K562 (cell line): ENCODE measurements at regions of chr6 and their contacts with region 1.

Region 1: GRCh38 chr6:24720604-24721460 is 1.9 kb upstream of the C6orf62 start:
- DNase-seq: peak; percentile 98 to 100 (median 98)
- ATAC-seq: peak; percentile 88
- H3K4me3 ChIP-seq: peak overlapping the region; percentile 94
- H3K27ac ChIP-seq: peak overlapping the region; percentile 97
- H3K4me1 ChIP-seq: peaks cover 6 to 17% of the 10 kb centered on the region in 2 experiments; a peak in 3 of 5 replicates
- H3K27me3 ChIP-seq: no peaks in the 10 kb centered on the region
- CTCF ChIP-seq: peak in 2 of 3 experiments; percentile 9 to 16; a peak in 1 of 6 replicates
- EP300 ChIP-seq: no peak; the same call in none of the 2 replicates
- POLR2A ChIP-seq: peak; percentile 99
- RAD21 ChIP-seq: no peak

Region 2: GRCh38 chr6:24117021-24117420 is 603.8 kb before region 1 on chr6:
- CTCF ChIA-PET with region 1: no interaction called
- POLR2A ChIA-PET with region 1: no interaction called
- in situ Hi-C with region 1: no loop called
- intact Hi-C with region 1: no loop called
- DNase-seq: no peak
- ATAC-seq: no peak
- H3K4me3 ChIP-seq: no peak overlapping the region
- H3K27ac ChIP-seq: no peak overlapping the region
- H3K4me1 ChIP-seq: no peaks in the 10 kb centered on the region
- H3K27me3 ChIP-seq: no peaks in the 10 kb centered on the region
- CTCF ChIP-seq: no peak
- EP300 ChIP-seq: no peak
- POLR2A ChIP-seq: no peak
- RAD21 ChIP-seq: no peak

Region 3: GRCh38 chr6:24666641-24667377 is 54.0 kb before region 1 on chr6 and contains the starts of genes ACOT13 and TDP2:
- CTCF ChIA-PET with region 1: interaction called, 3 read pairs
- POLR2A ChIA-PET with region 1: interaction called, 22 read pairs
- in situ Hi-C with region 1: no loop called
- intact Hi-C with region 1: loop called (anchors 2 kb)
- DNase-seq: peak; percentile 97 to 100 (median 98)
- ATAC-seq: peak; percentile 91
- H3K4me3 ChIP-seq: peak within 1 kb of the TSS; percentile 63
- H3K27ac ChIP-seq: peak within 1 kb of the TSS; percentile 91
- H3K4me1 ChIP-seq: peaks cover 8 to 12% of the 10 kb centered on the region in 2 experiments; a peak in 4 of 5 replicates
- H3K27me3 ChIP-seq: no peaks in the 10 kb centered on the region
- CTCF ChIP-seq: peak; percentile 71 to 82 (median 79)
- EP300 ChIP-seq: peak; percentile 37
- POLR2A ChIP-seq: peak; percentile 94
- RAD21 ChIP-seq: peak; percentile 53 to 56; a peak in 3 of 4 replicates
- polyA plus RNA-seq, gene ACOT13: 106 to 127 TPM
- polyA plus RNA-seq, gene TDP2: 27.7 to 28.7 TPM

Region 4: DNA sequence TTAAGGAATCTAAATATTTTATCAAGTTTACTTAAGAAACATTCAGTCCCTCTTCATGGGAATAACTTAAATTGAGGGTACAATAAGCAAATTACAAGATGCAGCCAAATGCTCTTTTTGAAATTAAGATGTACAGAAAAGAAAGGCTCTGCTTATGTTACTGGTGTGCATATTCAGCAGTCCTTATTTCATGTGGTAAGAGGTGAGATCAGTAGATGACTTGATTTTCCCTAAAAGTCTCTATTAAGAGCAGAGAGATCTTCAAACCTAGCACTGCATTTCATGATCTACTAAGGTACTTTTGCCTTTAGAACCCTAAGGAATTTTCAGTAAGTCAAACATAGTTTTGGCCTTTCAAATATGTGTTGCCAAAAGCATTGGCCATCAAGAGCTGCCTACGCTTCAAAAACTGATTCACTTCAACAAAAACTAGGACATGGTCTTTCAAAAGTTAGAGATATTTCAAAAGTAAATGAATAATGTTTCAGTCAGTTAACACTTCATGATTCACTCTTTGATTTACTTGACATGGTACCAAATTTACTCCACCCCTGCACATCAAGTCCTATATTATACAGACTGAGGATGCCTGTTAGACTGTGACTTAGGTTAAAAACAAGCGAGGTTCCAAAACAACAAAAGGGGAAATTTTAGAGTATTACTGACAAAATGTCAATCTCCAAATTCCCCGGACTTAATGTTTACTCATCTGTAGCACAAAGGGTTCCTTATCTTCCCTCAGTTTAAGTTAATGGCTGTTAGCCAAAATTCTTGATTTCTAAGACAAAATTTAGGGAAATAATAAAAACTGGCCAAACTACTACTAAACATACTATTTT is 21.1 kb before region 1 on chr6:
- CTCF ChIA-PET with region 1: no interaction called
- POLR2A ChIA-PET with region 1: interaction called, 31 read pairs
- in situ Hi-C with region 1: no loop called
- intact Hi-C with region 1: no loop called
- DNase-seq: no peak
- ATAC-seq: no peak
- H3K4me3 ChIP-seq: no peak overlapping the region
- H3K27ac ChIP-seq: no peak overlapping the region
- H3K4me1 ChIP-seq: no peaks in the 10 kb centered on the region
- H3K27me3 ChIP-seq: no peaks in the 10 kb centered on the region
- CTCF ChIP-seq: no peak
- EP300 ChIP-seq: no peak
- POLR2A ChIP-seq: no peak
- RAD21 ChIP-seq: no peak

Region 5: GRCh38 chr6:24710519-24711303 is 10.1 kb before region 1 on chr6:
- CTCF ChIA-PET with region 1: no interaction called
- POLR2A ChIA-PET with region 1: interaction called, 45 read pairs
- in situ Hi-C with region 1: no loop called
- intact Hi-C with region 1: no loop called
- DNase-seq: no peak
- ATAC-seq: no peak
- H3K4me3 ChIP-seq: no peak overlapping the region
- H3K27ac ChIP-seq: no peak overlapping the region
- H3K4me1 ChIP-seq: no peaks in the 10 kb centered on the region; a peak in 1 of 5 replicates
- H3K27me3 ChIP-seq: no peaks in the 10 kb centered on the region
- CTCF ChIP-seq: no peak
- EP300 ChIP-seq: no peak
- POLR2A ChIP-seq: no peak
- RAD21 ChIP-seq: no peak

Region 6: DNA sequence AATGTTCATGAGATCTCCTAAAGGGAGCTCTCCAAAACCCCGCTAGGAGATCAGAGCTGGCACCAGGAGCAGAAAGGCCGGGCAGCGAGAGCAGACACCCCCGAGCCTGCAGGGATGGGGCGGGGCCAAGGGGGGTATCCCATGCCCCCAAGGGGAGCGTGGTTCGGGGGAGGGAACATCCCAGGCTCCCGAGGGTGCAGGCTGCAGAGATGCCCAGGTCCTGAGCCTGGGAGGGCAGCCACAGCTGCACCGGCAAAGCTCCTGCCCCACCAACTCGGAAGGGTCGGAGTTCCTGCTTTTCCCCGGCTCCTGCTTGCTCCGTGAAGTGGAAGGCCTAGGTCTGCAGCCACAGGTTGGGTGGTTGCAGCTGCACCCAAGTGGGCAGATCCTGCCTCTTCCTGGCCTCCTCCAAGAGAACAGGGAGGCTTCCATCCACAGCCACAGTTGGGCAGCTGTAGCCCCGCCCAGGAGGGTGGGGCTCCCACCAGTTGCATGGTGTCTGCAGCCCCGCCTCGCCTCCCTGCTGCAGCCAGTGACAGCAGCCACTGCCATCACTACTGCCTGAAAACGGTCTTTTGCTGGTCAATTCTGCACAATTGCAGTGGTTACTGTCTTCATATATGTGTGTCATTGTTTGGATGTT is 40.5 kb after region 1 on chr6:
- CTCF ChIA-PET with region 1: interaction called, 4 read pairs
- POLR2A ChIA-PET with region 1: interaction called, 8 read pairs
- in situ Hi-C with region 1: no loop called
- intact Hi-C with region 1: loop called (anchors 2 kb)
- DNase-seq: peak; percentile 40 to 73 (median 46)
- ATAC-seq: peak; percentile 99
- H3K4me3 ChIP-seq: no peak overlapping the region
- H3K27ac ChIP-seq: no peak overlapping the region
- H3K4me1 ChIP-seq: peaks cover 4 to 10% of the 10 kb centered on the region in 2 experiments; a peak in 3 of 5 replicates
- H3K27me3 ChIP-seq: no peaks in the 10 kb centered on the region
- CTCF ChIP-seq: no peak
- EP300 ChIP-seq: no peak
- POLR2A ChIP-seq: no peak
- RAD21 ChIP-seq: no peak

Region 7: GRCh38 chr6:24774696-24775519 is 54.1 kb after region 1 on chr6 and contains the start of gene GMNN:
- CTCF ChIA-PET with region 1: no interaction called
- POLR2A ChIA-PET with region 1: interaction called, 16 read pairs
- in situ Hi-C with region 1: no loop called
- intact Hi-C with region 1: loop called (anchors 1 kb)
- DNase-seq: peak; percentile 99 to 100 (median 99)
- ATAC-seq: peak; percentile 95
- H3K4me3 ChIP-seq: peak within 1 kb of the TSS; percentile 67
- H3K27ac ChIP-seq: peak within 1 kb of the TSS; percentile 99
- H3K4me1 ChIP-seq: peaks cover 8 to 12% of the 10 kb centered on the region in 2 experiments; a peak in 4 of 5 replicates
- H3K27me3 ChIP-seq: no peaks in the 10 kb centered on the region
- CTCF ChIP-seq: no peak
- EP300 ChIP-seq: peak; percentile 7
- POLR2A ChIP-seq: peak; percentile 99
- RAD21 ChIP-seq: no peak
- polyA plus RNA-seq, gene GMNN: 331 to 370 TPM

Region 8: DNA sequence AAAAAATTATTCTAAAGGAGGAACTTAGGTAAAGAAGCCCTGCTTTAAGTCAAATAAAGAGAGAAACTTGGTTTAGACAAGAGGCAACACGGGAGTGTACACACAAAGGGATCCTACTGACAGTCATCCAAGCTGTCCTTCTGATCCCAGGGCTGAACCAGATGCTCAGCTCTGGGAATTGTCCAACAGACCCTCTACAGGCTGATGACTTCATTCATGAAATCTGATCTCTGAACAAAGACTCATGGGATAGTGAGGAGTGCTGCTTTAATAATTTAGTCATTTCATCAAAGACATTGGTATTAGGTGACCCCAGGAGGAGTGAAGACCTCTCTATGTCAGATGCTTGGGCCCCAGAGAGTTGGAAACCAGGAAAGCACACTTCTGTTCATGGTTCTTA is 143.5 kb after region 1 on chr6:
- CTCF ChIA-PET with region 1: no interaction called
- POLR2A ChIA-PET with region 1: no interaction called
- in situ Hi-C with region 1: no loop called
- intact Hi-C with region 1: no loop called
- DNase-seq: no peak
- ATAC-seq: no peak
- H3K4me3 ChIP-seq: no peak overlapping the region
- H3K27ac ChIP-seq: no peak overlapping the region
- H3K4me1 ChIP-seq: no peaks in the 10 kb centered on the region
- H3K27me3 ChIP-seq: peaks cover 0 to 5% of the 10 kb centered on the region in 2 experiments
- CTCF ChIP-seq: no peak
- EP300 ChIP-seq: no peak
- POLR2A ChIP-seq: no peak
- RAD21 ChIP-seq: no peak